ENCODE measurements at regions of chr10 and their contacts with region 1.

Region 1: DNA sequence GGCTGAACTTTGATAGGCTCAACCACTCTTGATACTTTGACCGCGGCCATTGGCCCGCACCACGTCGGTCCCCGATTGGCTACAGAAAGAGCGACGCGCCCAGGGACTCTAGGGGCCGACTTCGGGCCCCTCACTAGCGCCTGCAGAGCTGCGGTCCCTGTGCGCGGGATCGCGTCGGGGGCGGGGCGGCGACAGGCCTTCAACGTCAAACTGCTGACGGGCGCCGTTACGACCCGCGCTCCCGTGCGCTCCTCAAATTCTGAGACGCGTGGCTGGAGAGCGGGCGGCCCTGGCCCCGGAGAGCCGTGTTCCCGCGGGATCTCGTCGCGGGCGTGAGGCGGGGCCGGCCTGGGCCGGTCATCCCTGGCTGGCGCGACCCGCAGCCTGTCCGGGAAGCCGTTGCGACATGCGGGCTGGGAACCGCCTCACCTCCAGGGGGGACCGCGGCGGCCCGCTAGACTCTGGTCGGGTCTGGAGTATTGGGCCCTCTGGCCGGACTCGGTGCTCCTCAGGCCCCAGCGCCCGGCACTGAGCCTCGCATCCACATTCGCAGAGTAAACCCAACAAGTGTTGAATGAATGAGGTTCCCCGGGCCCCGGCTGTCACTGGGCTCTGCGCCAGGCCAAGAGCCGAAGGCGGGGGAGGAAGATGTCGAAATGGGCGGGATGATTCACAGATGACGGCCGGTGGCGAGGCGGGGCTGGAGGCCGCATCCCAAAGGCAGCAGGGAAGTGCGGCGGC is 644 bp upstream of the SLC25A28 start:
- DNase-seq: peak; percentile 95
- ATAC-seq: peak; percentile 90
- H3K4me3 Mint-ChIP-seq: peak overlapping the region; percentile 79
- H3K27ac Mint-ChIP-seq: peak overlapping the region; percentile 92
- H3K4me1 Mint-ChIP-seq: peaks cover 36% of the 10 kb centered on the region
- H3K27me3 Mint-ChIP-seq: no peaks in the 10 kb centered on the region
- CTCF ChIP-seq: no peak

Region 2: DNA sequence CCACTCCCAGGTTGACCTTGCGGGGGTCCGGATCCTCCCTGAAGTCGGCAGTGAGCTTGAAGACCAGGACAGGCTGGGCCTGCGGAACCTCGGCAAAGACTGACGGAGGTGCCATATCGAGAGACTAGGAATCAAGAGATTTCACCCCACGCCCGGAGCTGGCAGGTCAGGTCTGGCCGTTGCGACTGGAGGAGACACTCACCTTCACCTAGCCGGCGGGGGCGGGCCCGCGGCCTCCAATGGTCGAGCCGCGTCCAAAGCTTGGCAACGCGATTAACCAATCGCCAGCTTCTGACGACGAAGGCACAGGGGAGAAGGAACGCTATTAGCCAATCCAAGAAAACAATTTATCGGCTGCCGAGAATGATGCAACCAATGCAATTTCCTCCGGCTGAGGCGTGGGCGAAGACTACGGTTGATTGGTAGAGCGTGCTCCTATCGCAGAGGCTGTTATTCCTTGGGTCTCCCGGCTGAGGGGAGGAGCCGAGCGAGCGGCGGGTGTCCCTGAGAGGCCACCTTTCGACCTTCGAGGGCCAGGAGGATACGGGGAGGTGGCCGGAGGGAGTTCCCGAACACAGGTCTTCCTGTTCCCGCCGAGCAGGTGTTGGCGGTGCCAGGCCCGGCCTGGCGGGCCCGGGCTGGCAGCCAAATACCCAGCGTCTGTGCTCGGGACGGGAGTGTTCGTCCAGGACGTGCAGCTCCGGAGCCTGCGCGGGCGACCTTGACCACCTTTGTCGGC is 190.3 kb before region 1 on chr10 and contains the start of gene GOT1:
- CTCF ChIA-PET with region 1: interaction called, 18 read pairs
- POLR2A ChIA-PET with region 1: interaction called, 37 read pairs
- intact Hi-C with region 1: loop called (anchors 2 kb)
- DNase-seq: peak; percentile 99
- ATAC-seq: peak; percentile 94
- H3K4me3 Mint-ChIP-seq: peak within 1 kb of the TSS; percentile 100
- H3K27ac Mint-ChIP-seq: peak within 1 kb of the TSS; percentile 99
- H3K4me1 Mint-ChIP-seq: peaks cover 31% of the 10 kb centered on the region
- H3K27me3 Mint-ChIP-seq: no peaks in the 10 kb centered on the region
- CTCF ChIP-seq: no peak
- total RNA-seq, gene GOT1: 48.7 to 51.5 TPM

Region 3: GRCh38 chr10:99560277-99561126 is 60.4 kb before region 1 on chr10:
- CTCF ChIA-PET with region 1: interaction called, 80 read pairs
- POLR2A ChIA-PET with region 1: no interaction called
- intact Hi-C with region 1: loop called (anchors 5 kb)
- DNase-seq: peak; percentile 43
- ATAC-seq: no peak
- H3K4me3 Mint-ChIP-seq: no peak overlapping the region
- H3K27ac Mint-ChIP-seq: no peak overlapping the region
- H3K4me1 Mint-ChIP-seq: peaks cover 11% of the 10 kb centered on the region
- H3K27me3 Mint-ChIP-seq: peaks cover 19% of the 10 kb centered on the region
- CTCF ChIP-seq: peak; percentile 88

Region 4: DNA sequence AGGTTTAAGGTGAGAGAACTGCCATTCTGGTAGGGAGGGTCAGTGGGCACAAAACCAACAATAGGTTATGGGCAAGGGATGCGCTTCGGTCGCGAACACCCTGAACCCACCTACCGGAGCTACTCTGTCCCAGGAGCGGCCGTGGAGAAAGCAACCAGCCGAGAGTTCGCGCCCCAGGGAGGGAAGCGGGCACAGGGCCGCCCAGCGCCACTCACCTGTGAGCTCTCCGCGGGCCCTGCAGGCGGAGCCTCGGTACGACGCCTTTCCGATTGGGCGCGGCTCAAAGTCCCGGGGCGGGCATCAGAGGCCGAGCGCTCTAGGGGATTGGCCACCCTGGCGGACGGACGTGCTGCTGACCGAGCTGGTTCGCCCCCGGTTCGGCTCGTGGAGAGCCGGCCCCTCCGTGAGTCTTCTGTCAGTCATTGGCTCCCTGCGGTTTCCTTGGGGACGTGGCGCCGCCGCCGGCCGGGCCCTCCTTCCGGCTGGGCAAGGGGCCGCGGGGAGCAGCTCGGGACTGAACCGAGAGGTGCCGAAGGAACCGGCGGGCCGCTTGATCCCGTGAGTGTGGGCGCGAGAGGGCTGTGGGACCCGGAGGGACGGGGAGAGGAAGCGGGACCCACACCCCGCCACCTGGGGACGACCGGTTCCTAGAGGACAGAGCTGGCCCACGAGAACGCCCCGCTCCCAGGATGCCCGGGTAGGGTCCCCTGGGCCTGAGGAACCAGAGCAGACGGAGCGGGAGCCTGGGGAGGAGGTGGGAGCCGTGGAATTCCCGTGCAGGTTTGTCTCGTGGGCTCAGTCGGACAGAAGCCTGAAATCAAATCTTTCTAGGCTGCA is 38.4 kb after region 1 on chr10 and contains the start of gene ENTPD7:
- CTCF ChIA-PET with region 1: interaction called, 5 read pairs
- POLR2A ChIA-PET with region 1: interaction called, 39 read pairs
- intact Hi-C with region 1: loop called (anchors 5 kb)
- DNase-seq: peak; percentile 96
- ATAC-seq: peak; percentile 99
- H3K4me3 Mint-ChIP-seq: peak within 1 kb of the TSS; percentile 84
- H3K27ac Mint-ChIP-seq: peak within 1 kb of the TSS; percentile 83
- H3K4me1 Mint-ChIP-seq: peaks cover 21% of the 10 kb centered on the region
- H3K27me3 Mint-ChIP-seq: peaks cover 8% of the 10 kb centered on the region
- CTCF ChIP-seq: peak; percentile 14
- total RNA-seq, gene ENTPD7: 1.9 to 2.2 TPM

Region 5: DNA sequence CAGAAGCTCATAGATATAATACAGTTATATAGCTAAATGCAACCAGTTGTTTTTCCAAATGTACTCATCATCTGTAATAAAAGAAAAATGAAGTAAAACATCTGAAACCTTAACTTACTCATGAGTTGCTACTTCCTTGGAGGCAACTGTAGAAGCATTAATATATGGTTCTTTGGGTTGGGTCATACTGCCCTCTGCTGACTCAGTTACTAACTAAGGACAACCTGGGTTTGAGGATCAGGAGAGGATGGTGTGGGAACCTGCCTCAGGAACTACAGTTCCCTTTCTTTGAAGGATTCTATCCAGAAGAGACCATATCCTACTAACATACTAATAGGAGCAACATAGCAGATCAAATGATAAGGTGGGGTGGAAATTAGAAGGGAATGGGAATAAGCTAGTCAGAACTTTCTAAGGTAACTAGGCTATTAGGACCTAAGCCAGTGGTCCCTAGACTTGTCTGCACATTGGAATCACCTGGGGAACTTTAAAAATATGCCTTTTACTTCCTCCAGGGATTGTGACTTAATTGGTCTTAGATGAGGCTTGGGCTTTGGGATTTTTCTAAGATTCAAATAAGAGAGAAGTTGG is 90.3 kb after region 1 on chr10:
- CTCF ChIA-PET with region 1: interaction called, 3 read pairs
- POLR2A ChIA-PET with region 1: no interaction called
- intact Hi-C with region 1: loop called (anchors 5 kb)
- DNase-seq: peak; percentile 56
- ATAC-seq: peak; percentile 72
- H3K4me3 Mint-ChIP-seq: no peak overlapping the region
- H3K27ac Mint-ChIP-seq: no peak overlapping the region
- H3K4me1 Mint-ChIP-seq: peaks cover 10% of the 10 kb centered on the region
- H3K27me3 Mint-ChIP-seq: no peaks in the 10 kb centered on the region
- CTCF ChIP-seq: peak; percentile 59

Region 6: GRCh38 chr10:99732033-99732912 is 111.4 kb after region 1 on chr10 and contains the starts of genes COX15 and CUTC:
- CTCF ChIA-PET with region 1: interaction called, 4 read pairs
- POLR2A ChIA-PET with region 1: interaction called, 26 read pairs
- intact Hi-C with region 1: no loop called
- DNase-seq: peak; percentile 96
- ATAC-seq: peak; percentile 93
- H3K4me3 Mint-ChIP-seq: peak within 1 kb of the TSS; percentile 99
- H3K27ac Mint-ChIP-seq: peak within 1 kb of the TSS; percentile 100
- H3K4me1 Mint-ChIP-seq: peaks cover 33% of the 10 kb centered on the region
- H3K27me3 Mint-ChIP-seq: no peaks in the 10 kb centered on the region
- CTCF ChIP-seq: peak; percentile 48
- total RNA-seq, gene COX15: 34.2 to 35.3 TPM
- total RNA-seq, gene CUTC: 37.4 to 38.1 TPM